Pancreas (tissue), 10 donors: ENCODE measurements at regions of chr18 and their contacts with region 1.

Region 1: GRCh38 chr18:21600526-21601410 is at the start of gene ESCO1:
- DNase-seq: peak; percentile 91 to 98 (median 96)
- ATAC-seq: peak; percentile 86 to 94 (median 93)
- H3K4me3 ChIP-seq: peak within 1 kb of the TSS; percentile 76 to 95 (median 84)
- H3K27ac ChIP-seq: peak within 1 kb of the TSS; percentile 92 to 98 (median 97)
- H3K4me1 ChIP-seq: peaks cover 0 to 21% (median 5%) of the 10 kb centered on the region in 3 donors
- H3K27me3 ChIP-seq: no peaks in the 10 kb centered on the region
- CTCF ChIP-seq: peak; percentile 95 to 98 (median 96)
- total RNA-seq, gene ESCO1: 5.3 to 10.5 (median 5.8) TPM

Region 2: DNA sequence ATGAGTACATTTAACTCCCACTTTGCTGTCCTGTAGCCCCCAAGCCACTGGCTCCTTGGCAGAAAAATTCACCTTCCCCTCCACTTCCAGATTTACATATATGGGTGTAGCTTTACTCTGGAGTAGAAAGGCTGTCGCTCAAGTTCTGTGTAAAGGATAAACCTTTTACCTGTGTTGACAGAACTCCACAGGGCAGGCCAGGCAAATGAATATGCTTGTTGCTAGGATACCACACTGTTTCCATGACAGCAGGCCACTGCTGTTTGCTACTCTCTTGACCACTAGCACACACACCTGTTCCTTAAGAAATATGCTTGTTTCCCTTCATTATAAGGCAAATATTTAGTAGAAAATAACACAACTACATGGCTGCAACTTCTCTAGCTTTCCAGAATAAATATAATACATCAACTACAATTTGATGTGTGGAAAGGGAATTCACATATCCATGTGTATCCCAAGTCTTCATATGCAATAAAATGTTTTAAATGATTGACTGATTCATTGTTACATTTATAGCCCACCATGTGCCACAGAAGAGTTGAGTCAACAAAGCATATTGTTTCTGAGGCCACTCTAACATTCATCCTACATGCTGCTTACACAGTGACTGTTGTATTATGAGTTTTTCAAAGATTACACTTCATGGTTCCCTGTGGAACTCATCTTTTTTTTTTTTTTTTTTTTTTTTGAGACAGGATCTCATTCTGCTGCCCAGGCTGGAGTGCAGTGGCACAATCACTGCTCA is 433.0 kb before region 1 on chr18:
- intact Hi-C with region 1: no loop called
- DNase-seq: peak in 4 of 6 donors; percentile 27 to 70 (median 44)
- ATAC-seq: peak; percentile 63 to 97 (median 86)
- H3K4me3 ChIP-seq: no peak overlapping the region
- H3K27ac ChIP-seq: no peak overlapping the region
- H3K4me1 ChIP-seq: no peaks in the 10 kb centered on the region
- H3K27me3 ChIP-seq: no peaks in the 10 kb centered on the region
- CTCF ChIP-seq: no peak

Region 3: GRCh38 chr18:21203096-21203495 is 397.7 kb before region 1 on chr18:
- intact Hi-C with region 1: no loop called
- DNase-seq: no peak
- ATAC-seq: no peak
- H3K4me3 ChIP-seq: no peak overlapping the region
- H3K27ac ChIP-seq: no peak overlapping the region
- H3K4me1 ChIP-seq: no peaks in the 10 kb centered on the region
- H3K27me3 ChIP-seq: no peaks in the 10 kb centered on the region
- CTCF ChIP-seq: no peak

Region 4: GRCh38 chr18:21513292-21513691 is 87.5 kb before region 1 on chr18:
- intact Hi-C with region 1: loop called in 1 of 3 experiments (anchors 10 kb)
- DNase-seq: no peak
- ATAC-seq: no peak
- H3K4me3 ChIP-seq: no peak overlapping the region
- H3K27ac ChIP-seq: no peak overlapping the region
- H3K4me1 ChIP-seq: no peaks in the 10 kb centered on the region
- H3K27me3 ChIP-seq: no peaks in the 10 kb centered on the region
- CTCF ChIP-seq: no peak

Region 5: GRCh38 chr18:21786526-21786925 is 185.8 kb after region 1 on chr18:
- intact Hi-C with region 1: no loop called
- DNase-seq: no peak
- ATAC-seq: no peak
- H3K4me3 ChIP-seq: no peak overlapping the region
- H3K27ac ChIP-seq: no peak overlapping the region
- H3K4me1 ChIP-seq: no peaks in the 10 kb centered on the region
- H3K27me3 ChIP-seq: no peaks in the 10 kb centered on the region
- CTCF ChIP-seq: no peak